A673 (cell line): ENCODE measurements at regions of chr2 and their contacts with region 1.

Region 1: GRCh38 chr2:224077773-224078507 is 38.9 kb upstream of the SERPINE2 start:
- DNase-seq: no peak
- H3K4me3 ChIP-seq: no peak overlapping the region
- H3K27ac ChIP-seq: no peak overlapping the region
- H3K4me1 ChIP-seq: no peaks in the 10 kb centered on the region
- H3K27me3 ChIP-seq: no peaks in the 10 kb centered on the region
- CTCF ChIP-seq: no peak

Region 2: GRCh38 chr2:222922019-222922800 is 1155.7 kb before region 1 on chr2:
- CTCF ChIA-PET with region 1: no interaction called
- POLR2A ChIA-PET with region 1: interaction called, 11 read pairs
- intact Hi-C with region 1: no loop called
- DNase-seq: no peak
- H3K4me3 ChIP-seq: no peak overlapping the region
- H3K27ac ChIP-seq: no peak overlapping the region
- H3K4me1 ChIP-seq: peaks cover 6% of the 10 kb centered on the region
- H3K27me3 ChIP-seq: no peaks in the 10 kb centered on the region
- CTCF ChIP-seq: no peak